Natural killer cell (primary cell): ENCODE measurements at regions of chr12 and their contacts with region 1.

Region 1: DNA sequence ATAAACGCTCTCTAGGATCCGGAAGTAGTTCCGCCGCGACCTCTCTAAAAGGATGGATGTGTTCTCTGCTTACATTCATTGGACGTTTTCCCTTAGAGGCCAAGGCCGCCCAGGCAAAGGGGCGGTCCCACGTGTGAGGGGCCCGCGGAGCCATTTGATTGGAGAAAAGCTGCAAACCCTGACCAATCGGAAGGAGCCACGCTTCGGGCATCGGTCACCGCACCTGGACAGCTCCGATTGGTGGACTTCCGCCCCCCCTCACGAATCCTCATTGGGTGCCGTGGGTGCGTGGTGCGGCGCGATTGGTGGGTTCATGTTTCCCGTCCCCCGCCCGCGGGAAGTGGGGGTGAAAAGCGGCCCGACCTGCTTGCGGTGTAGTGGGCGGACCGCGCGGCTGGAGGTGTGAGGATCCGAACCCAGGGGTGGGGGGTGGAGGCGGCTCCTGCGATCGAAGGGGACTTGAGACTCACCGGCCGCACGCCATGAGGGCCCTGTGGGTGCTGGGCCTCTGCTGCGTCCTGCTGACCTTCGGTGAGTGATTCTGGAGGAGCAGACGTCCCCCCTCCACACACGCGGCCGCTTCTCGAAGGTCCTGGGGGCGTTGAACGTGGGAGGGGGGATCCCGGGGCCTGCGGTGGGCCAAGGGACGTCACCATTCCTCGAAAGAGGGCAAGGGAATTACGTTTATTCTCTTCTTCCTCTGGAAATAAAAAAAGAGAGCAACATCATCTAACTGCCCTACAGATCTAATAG is at the start of gene HSP90B1:
- DNase-seq: peak; percentile 100
- ATAC-seq: peak; percentile 72 to 90 (median 75)
- H3K4me3 ChIP-seq: peak within 1 kb of the TSS; percentile 74
- H3K4me3 Mint-ChIP-seq: peak within 1 kb of the TSS; percentile 98
- H3K27ac ChIP-seq: peak within 1 kb of the TSS; percentile 99
- H3K27ac Mint-ChIP-seq: peak within 1 kb of the TSS; percentile 100
- H3K4me1 ChIP-seq: peaks cover 26% of the 10 kb centered on the region
- H3K4me1 Mint-ChIP-seq: peaks cover 51 to 61% of the 10 kb centered on the region in 2 donors
- H3K27me3 ChIP-seq: no peaks in the 10 kb centered on the region
- H3K27me3 Mint-ChIP-seq: peaks cover 0 to 3% of the 10 kb centered on the region in 2 donors
- CTCF ChIP-seq: no peak
- total RNA-seq, gene HSP90B1: 282 to 390 (median 389) TPM

Region 2: GRCh38 chr12:103947871-103948555 is 17.8 kb after region 1 on chr12:
- intact Hi-C with region 1: loop called (anchors 1 kb)
- DNase-seq: no peak
- ATAC-seq: no peak
- H3K4me3 ChIP-seq: no peak overlapping the region
- H3K4me3 Mint-ChIP-seq: no peak overlapping the region
- H3K27ac ChIP-seq: no peak overlapping the region
- H3K27ac Mint-ChIP-seq: peak overlapping the region; percentile 25 to 69
- H3K4me1 ChIP-seq: no peaks in the 10 kb centered on the region
- H3K4me1 Mint-ChIP-seq: peaks cover 4 to 12% of the 10 kb centered on the region in 2 donors
- H3K27me3 ChIP-seq: no peaks in the 10 kb centered on the region
- H3K27me3 Mint-ChIP-seq: no peaks in the 10 kb centered on the region
- CTCF ChIP-seq: no peak

Region 3: GRCh38 chr12:103956516-103957027 is 26.4 kb after region 1 on chr12:
- intact Hi-C with region 1: loop called (anchors 1 kb)
- DNase-seq: no peak
- ATAC-seq: peak in 1 of 3 donors; percentile 8
- H3K4me3 ChIP-seq: peak overlapping the region; percentile 53
- H3K4me3 Mint-ChIP-seq: peak overlapping the region; percentile 99
- H3K27ac ChIP-seq: peak overlapping the region; percentile 91
- H3K27ac Mint-ChIP-seq: peak overlapping the region; percentile 96 to 99
- H3K4me1 ChIP-seq: peaks cover 19% of the 10 kb centered on the region
- H3K4me1 Mint-ChIP-seq: peaks cover 31 to 42% of the 10 kb centered on the region in 2 donors
- H3K27me3 ChIP-seq: no peaks in the 10 kb centered on the region
- H3K27me3 Mint-ChIP-seq: no peaks in the 10 kb centered on the region
- CTCF ChIP-seq: no peak

Region 4: DNA sequence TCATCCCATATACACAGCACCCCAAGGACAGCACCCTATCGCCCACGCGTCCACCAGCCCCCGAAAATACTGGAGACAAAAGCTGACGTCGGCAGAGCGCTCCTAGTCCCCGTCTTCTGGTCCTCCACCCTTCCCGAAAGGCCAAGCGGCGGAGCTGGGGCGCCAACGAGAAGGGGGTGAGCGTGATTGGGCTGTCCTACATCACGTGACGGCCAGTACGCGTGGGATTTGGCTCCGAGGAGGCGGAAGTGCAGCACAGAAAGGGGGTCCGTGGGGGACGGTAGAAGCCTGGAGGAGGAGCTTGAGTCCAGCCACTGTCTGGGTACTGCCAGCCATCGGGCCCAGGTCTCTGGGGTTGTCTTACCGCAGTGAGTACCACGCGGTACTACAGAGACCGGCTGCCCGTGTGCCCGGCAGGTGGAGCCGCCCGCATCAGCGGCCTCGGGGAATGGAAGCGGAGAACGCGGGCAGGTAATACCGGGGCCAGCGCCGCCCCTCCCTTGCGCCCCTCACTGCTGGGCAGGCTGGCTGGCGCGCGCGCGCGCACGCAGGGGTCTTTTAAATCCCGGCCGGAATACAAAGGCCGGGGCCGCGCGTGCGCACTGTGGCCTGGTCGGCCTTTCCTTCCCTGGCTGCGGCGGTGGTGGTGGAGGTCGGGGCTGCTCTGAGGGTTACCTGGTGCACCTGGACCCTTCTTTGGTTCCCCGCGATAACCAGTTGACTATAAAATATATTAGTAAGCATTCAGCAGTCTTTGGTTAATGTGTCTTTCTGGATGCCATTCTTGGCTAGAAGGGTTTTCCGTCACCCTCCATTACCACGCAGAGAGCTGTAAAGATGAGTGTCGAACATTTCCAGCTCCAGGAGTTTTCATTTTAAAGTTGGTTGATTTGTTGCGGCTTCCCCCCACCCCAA is 35.6 kb after region 1 on chr12 and contains the start of gene TDG:
- intact Hi-C with region 1: loop called (anchors 1 kb)
- DNase-seq: peak; percentile 92 to 99
- ATAC-seq: peak; percentile 92 to 99 (median 94)
- H3K4me3 ChIP-seq: peak within 1 kb of the TSS; percentile 78
- H3K4me3 Mint-ChIP-seq: peak within 1 kb of the TSS; percentile 99
- H3K27ac ChIP-seq: peak within 1 kb of the TSS; percentile 91
- H3K27ac Mint-ChIP-seq: peak within 1 kb of the TSS; percentile 97 to 98
- H3K4me1 ChIP-seq: peaks cover 12% of the 10 kb centered on the region
- H3K4me1 Mint-ChIP-seq: peaks cover 44 to 49% of the 10 kb centered on the region in 2 donors
- H3K27me3 ChIP-seq: no peaks in the 10 kb centered on the region
- H3K27me3 Mint-ChIP-seq: no peaks in the 10 kb centered on the region
- CTCF ChIP-seq: no peak
- total RNA-seq, gene TDG: 28.2 to 28.7 (median 28.7) TPM

Region 5: GRCh38 chr12:104137913-104138796 is 207.9 kb after region 1 on chr12 and contains the start of gene NFYB:
- intact Hi-C with region 1: loop called (anchors 1 kb)
- DNase-seq: peak; percentile 88 to 97
- ATAC-seq: peak; percentile 94 to 98 (median 94)
- H3K4me3 ChIP-seq: peak within 1 kb of the TSS; percentile 54
- H3K4me3 Mint-ChIP-seq: peak within 1 kb of the TSS; percentile 74
- H3K27ac ChIP-seq: peak within 1 kb of the TSS; percentile 60
- H3K27ac Mint-ChIP-seq: peak within 1 kb of the TSS; percentile 28 to 63
- H3K4me1 ChIP-seq: peaks cover 12% of the 10 kb centered on the region
- H3K4me1 Mint-ChIP-seq: no peaks in the 10 kb centered on the region
- H3K27me3 ChIP-seq: no peaks in the 10 kb centered on the region
- H3K27me3 Mint-ChIP-seq: peaks cover 0 to 3% of the 10 kb centered on the region in 2 donors
- CTCF ChIP-seq: no peak
- total RNA-seq, gene NFYB: 13.3 to 17.4 (median 13.6) TPM

Region 6: DNA sequence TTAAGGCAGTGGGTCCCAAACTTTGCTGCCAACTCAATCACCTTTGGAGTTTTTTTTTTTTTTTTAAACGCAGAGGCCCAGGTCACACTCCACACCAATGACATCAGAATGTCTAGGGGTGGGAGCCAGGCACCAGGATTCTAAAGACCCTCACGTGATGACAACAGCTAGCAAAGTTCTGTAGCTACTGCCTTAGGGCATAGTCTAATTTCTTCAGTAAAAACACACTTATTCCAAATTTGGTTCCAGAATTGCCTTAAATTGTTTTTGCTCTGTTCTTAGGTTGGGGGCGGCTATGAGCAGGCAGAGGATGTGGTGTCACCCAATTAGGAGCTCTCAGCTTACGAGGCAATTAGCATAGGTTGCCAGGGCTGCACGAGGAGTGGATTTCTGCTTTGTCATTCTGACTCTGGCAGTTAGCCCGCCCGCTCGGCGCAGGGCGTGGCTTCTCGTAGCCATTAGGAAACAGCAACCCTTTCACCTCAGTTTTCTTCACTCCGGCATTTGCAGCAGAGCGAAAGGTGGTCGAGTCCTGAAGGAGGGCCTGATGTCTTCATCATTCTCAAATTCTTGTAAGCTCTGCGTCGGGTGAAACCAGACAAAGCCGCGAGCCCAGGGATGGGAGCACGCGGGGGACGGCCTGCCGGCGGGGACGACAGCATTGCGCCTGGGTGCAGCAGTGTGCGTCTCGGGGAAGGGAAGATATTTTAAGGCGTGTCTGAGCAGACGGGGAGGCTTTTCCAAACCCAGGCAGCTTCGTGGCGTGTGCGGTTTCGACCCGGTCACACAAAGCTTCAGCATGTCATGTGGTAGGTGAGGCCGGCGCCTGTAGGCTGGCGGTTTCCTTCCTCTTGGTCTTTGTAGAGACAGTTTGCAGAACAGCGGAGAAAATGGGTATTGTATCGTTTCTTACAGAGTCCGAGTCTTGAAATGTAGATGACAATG is 356.6 kb after region 1 on chr12:
- intact Hi-C with region 1: loop called (anchors 2 kb)
- DNase-seq: peak; percentile 77 to 94
- ATAC-seq: peak; percentile 88 to 96 (median 89)
- H3K4me3 ChIP-seq: peak overlapping the region; percentile 86
- H3K4me3 Mint-ChIP-seq: peak overlapping the region; percentile 98
- H3K27ac ChIP-seq: peak overlapping the region; percentile 88
- H3K27ac Mint-ChIP-seq: peak overlapping the region; percentile 97 to 99
- H3K4me1 ChIP-seq: peaks cover 32% of the 10 kb centered on the region
- H3K4me1 Mint-ChIP-seq: peaks cover 32 to 39% of the 10 kb centered on the region in 2 donors
- H3K27me3 ChIP-seq: no peaks in the 10 kb centered on the region
- H3K27me3 Mint-ChIP-seq: no peaks in the 10 kb centered on the region
- CTCF ChIP-seq: no peak